ENCODE measurements at regions of chr6 and their contacts with region 1.

Region 1: GRCh38 chr6:81752138-81752920 is at the start of gene TENT5A:
- DNase-seq: peak; percentile 73 to 91 (median 82)
- ATAC-seq: peak; percentile 81
- H3K4me3 ChIP-seq: peak within 1 kb of the TSS; percentile 92
- H3K4me3 Mint-ChIP-seq: peak within 1 kb of the TSS; percentile 98
- H3K27ac ChIP-seq: peak within 1 kb of the TSS; percentile 62 to 82
- H3K27ac Mint-ChIP-seq: peak within 1 kb of the TSS; percentile 89
- H3K4me1 ChIP-seq: peaks cover 26% of the 10 kb centered on the region
- H3K4me1 Mint-ChIP-seq: peaks cover 37% of the 10 kb centered on the region
- H3K27me3 ChIP-seq: no peaks in the 10 kb centered on the region
- H3K27me3 Mint-ChIP-seq: no peaks in the 10 kb centered on the region
- CTCF ChIP-seq: no peak
- total RNA-seq, gene TENT5A: 6.3 to 6.7 TPM

Region 2: DNA sequence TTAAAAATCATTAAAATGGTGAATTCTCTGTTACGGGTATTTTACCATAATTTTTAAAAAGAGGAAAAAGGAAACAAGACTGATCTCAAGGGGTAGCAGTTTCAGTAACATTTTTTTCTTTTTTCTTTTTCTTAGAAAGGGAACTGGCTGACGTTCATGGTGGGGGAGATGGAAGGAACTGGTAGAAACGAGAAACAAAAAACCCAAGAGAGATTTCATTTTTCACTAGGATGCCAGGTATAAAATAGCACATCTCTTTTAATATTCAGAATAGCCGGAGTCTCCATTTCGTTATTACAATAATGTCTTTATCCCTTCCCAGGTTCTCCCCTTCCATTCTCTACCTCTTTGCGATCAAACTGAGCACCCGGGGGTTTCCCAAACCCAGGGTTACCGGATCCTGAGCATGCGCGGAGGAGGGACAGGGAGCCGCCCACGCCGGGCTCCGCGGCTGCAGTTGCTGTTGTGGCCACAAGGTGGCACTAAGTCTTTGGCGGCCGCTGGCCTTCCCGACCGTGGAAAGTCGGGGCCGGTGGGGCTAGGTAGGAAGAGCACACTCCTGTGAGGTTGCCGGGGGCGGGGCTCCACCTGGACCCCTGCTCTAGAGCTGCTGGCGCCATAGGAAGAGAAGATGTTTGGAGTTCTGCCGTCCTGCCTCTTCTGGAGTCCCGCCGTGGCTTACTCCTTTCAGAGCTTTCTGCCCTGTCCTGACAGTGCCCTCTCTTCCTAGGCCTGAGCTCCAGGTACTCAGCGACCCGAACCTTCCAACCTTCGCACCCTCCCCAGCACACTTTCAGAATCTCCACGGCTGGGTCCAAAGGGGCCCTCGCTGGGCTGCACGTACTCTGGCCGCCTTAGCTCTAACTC is 1974.4 kb before region 1 on chr6:
- CTCF ChIA-PET with region 1: no interaction called
- POLR2A ChIA-PET with region 1: no interaction called
- intact Hi-C with region 1: loop called in 1 of 2 experiments (anchors 10 kb)
- DNase-seq: peak; percentile 72 to 93 (median 78)
- ATAC-seq: peak; percentile 97
- H3K4me3 ChIP-seq: peak overlapping the region; percentile 51
- H3K4me3 Mint-ChIP-seq: peak overlapping the region; percentile 83
- H3K27ac ChIP-seq: no peak overlapping the region
- H3K27ac Mint-ChIP-seq: no peak overlapping the region
- H3K4me1 ChIP-seq: peaks cover 9% of the 10 kb centered on the region
- H3K4me1 Mint-ChIP-seq: peaks cover 8% of the 10 kb centered on the region
- H3K27me3 ChIP-seq: no peaks in the 10 kb centered on the region
- H3K27me3 Mint-ChIP-seq: no peaks in the 10 kb centered on the region
- CTCF ChIP-seq: peak; percentile 98

Region 3: GRCh38 chr6:79949233-79949632 is 1803.1 kb before region 1 on chr6:
- CTCF ChIA-PET with region 1: interaction called, 4 read pairs
- POLR2A ChIA-PET with region 1: no interaction called
- intact Hi-C with region 1: loop called in 1 of 2 experiments (anchors 2 kb)
- DNase-seq: peak in 12 of 14 experiments; percentile 4 to 87 (median 32)
- ATAC-seq: peak; percentile 38
- H3K4me3 ChIP-seq: no peak overlapping the region
- H3K4me3 Mint-ChIP-seq: peak overlapping the region; percentile 68
- H3K27ac ChIP-seq: no peak overlapping the region
- H3K27ac Mint-ChIP-seq: no peak overlapping the region
- H3K4me1 ChIP-seq: peaks cover 25% of the 10 kb centered on the region
- H3K4me1 Mint-ChIP-seq: peaks cover 29% of the 10 kb centered on the region
- H3K27me3 ChIP-seq: peaks cover 7 to 31% of the 10 kb centered on the region in 2 experiments
- H3K27me3 Mint-ChIP-seq: peaks cover 23% of the 10 kb centered on the region
- CTCF ChIP-seq: peak; percentile 81

Region 4: GRCh38 chr6:80106418-80107235 is 1645.7 kb before region 1 on chr6 and contains the start of gene BCKDHB:
- CTCF ChIA-PET with region 1: interaction called, 3 read pairs
- POLR2A ChIA-PET with region 1: interaction called, 26 read pairs
- intact Hi-C with region 1: loop called (anchors 1 to 5 kb)
- DNase-seq: peak; percentile 94 to 99 (median 96)
- ATAC-seq: peak; percentile 97
- H3K4me3 ChIP-seq: peak within 1 kb of the TSS; percentile 80
- H3K4me3 Mint-ChIP-seq: peak within 1 kb of the TSS; percentile 93
- H3K27ac ChIP-seq: peak within 1 kb of the TSS; percentile 23 to 30
- H3K27ac Mint-ChIP-seq: peak within 1 kb of the TSS; percentile 80
- H3K4me1 ChIP-seq: peaks cover 9% of the 10 kb centered on the region
- H3K4me1 Mint-ChIP-seq: peaks cover 36% of the 10 kb centered on the region
- H3K27me3 ChIP-seq: no peaks in the 10 kb centered on the region
- H3K27me3 Mint-ChIP-seq: peaks cover 14% of the 10 kb centered on the region
- CTCF ChIP-seq: no peak
- total RNA-seq, gene BCKDHB: 7.8 to 8.1 TPM

Region 5: DNA sequence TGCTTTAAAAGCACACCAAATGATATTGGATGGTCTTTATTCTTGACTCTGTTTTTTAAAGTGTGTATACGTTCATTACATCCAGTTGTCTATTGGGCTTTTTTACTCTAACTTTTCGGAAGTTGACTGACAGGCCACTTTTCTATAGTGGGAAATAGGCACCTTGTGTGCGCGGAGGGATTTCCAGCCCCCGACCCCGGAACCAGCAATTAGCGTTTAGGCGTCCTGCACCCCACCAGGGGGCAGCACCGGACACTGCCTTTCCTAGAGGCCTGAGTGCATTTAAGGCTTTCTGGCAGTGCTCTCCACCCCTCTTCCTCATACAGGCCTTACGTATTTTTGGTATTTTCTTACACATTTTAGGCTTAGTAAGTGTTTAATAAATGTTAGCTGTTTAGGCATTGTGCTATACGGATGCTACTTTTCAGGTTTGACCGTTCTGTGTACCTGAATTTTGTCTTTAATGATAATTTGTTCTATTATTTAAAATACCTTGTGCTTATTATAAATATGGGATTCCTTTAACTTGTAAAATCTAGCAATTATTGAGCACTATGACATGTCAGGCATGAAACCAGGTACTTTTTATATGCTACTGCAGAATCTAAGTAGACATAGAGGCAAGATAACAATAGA is 1414.0 kb before region 1 on chr6:
- CTCF ChIA-PET with region 1: interaction called, 5 read pairs
- POLR2A ChIA-PET with region 1: no interaction called
- intact Hi-C with region 1: loop called (anchors 1 to 2 kb)
- DNase-seq: peak; percentile 38 to 71 (median 60)
- ATAC-seq: peak; percentile 68
- H3K4me3 ChIP-seq: no peak overlapping the region
- H3K4me3 Mint-ChIP-seq: no peak overlapping the region
- H3K27ac ChIP-seq: no peak overlapping the region
- H3K27ac Mint-ChIP-seq: no peak overlapping the region
- H3K4me1 ChIP-seq: no peaks in the 10 kb centered on the region
- H3K4me1 Mint-ChIP-seq: no peaks in the 10 kb centered on the region
- H3K27me3 ChIP-seq: no peaks in the 10 kb centered on the region
- H3K27me3 Mint-ChIP-seq: no peaks in the 10 kb centered on the region
- CTCF ChIP-seq: peak; percentile 81

Region 6: GRCh38 chr6:82247634-82248232 is 495.4 kb after region 1 on chr6 and contains the start of gene IBTK:
- CTCF ChIA-PET with region 1: no interaction called
- POLR2A ChIA-PET with region 1: interaction called, 5 read pairs
- intact Hi-C with region 1: loop called in 1 of 2 experiments (anchors 10 kb)
- DNase-seq: peak; percentile 84 to 97 (median 90)
- ATAC-seq: peak; percentile 87
- H3K4me3 ChIP-seq: peak within 1 kb of the TSS; percentile 67
- H3K4me3 Mint-ChIP-seq: peak within 1 kb of the TSS; percentile 96
- H3K27ac ChIP-seq: peak within 1 kb of the TSS; percentile 59 to 73
- H3K27ac Mint-ChIP-seq: peak within 1 kb of the TSS; percentile 98
- H3K4me1 ChIP-seq: peaks cover 24% of the 10 kb centered on the region
- H3K4me1 Mint-ChIP-seq: peaks cover 51% of the 10 kb centered on the region
- H3K27me3 ChIP-seq: no peaks in the 10 kb centered on the region
- H3K27me3 Mint-ChIP-seq: no peaks in the 10 kb centered on the region
- CTCF ChIP-seq: no peak
- total RNA-seq, gene IBTK: 11.0 to 11.2 TPM